CD4-positive, alpha-beta memory T cell (primary cell): ENCODE measurements at regions of chr1 and their contacts with region 1.

Region 1: DNA sequence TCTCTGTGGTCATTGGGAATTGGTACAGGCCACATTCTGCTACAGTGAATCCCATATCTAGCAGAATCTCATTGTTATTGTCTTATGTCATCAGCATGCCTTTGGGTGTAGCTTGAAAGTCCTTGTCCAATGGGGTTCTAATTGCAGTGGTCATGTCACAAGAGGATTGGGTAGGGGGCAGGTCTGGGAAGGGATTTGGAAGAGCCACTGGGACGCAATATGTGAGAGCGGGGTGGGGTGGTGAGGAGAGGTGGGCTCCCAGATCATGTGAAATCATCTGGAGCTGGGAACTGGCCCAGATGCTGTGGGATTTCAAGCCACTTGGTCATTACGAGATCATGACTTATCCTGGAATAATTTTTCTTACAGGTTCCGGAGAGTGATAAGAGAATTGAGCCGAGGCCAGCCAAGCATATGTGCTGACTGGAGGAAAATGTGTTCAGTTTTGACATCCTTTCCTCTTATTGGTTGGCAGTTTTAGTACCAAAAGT is 16.3 kb downstream of the CNIH3 start:
- DNase-seq: no peak
- H3K4me3 ChIP-seq: no peak overlapping the region
- H3K4me3 Mint-ChIP-seq: no peak overlapping the region
- H3K27ac ChIP-seq: no peak overlapping the region
- H3K27ac Mint-ChIP-seq: peak overlapping the region in 1 of 7 donors; percentile 73
- H3K4me1 ChIP-seq: peaks cover 2% of the 10 kb centered on the region
- H3K4me1 Mint-ChIP-seq: peaks cover 3 to 4% (median 3%) of the 10 kb centered on the region in 4 donors
- H3K27me3 ChIP-seq: no peaks in the 10 kb centered on the region
- H3K27me3 Mint-ChIP-seq: peaks cover 0 to 5% of the 10 kb centered on the region in 2 donors

Region 2: GRCh38 chr1:224644553-224645154 is 12.2 kb after region 1 on chr1:
- CTCF ChIA-PET with region 1: interaction called, 10 read pairs
- POLR2A ChIA-PET with region 1: no interaction called
- intact Hi-C with region 1: no loop called
- DNase-seq: peak in 4 of 5 donors; percentile 52 to 65 (median 60)
- H3K4me3 ChIP-seq: no peak overlapping the region
- H3K4me3 Mint-ChIP-seq: no peak overlapping the region
- H3K27ac ChIP-seq: no peak overlapping the region
- H3K27ac Mint-ChIP-seq: no peak overlapping the region
- H3K4me1 ChIP-seq: no peaks in the 10 kb centered on the region
- H3K4me1 Mint-ChIP-seq: peaks cover 0 to 2% (median 0%) of the 10 kb centered on the region in 4 donors
- H3K27me3 ChIP-seq: no peaks in the 10 kb centered on the region
- H3K27me3 Mint-ChIP-seq: peaks cover 2 to 9% of the 10 kb centered on the region in 2 donors

Region 3: GRCh38 chr1:224684979-224685425 is 52.6 kb after region 1 on chr1:
- CTCF ChIA-PET with region 1: no interaction called
- POLR2A ChIA-PET with region 1: no interaction called
- intact Hi-C with region 1: no loop called
- DNase-seq: no peak
- H3K4me3 ChIP-seq: no peak overlapping the region
- H3K4me3 Mint-ChIP-seq: no peak overlapping the region
- H3K27ac ChIP-seq: no peak overlapping the region
- H3K27ac Mint-ChIP-seq: no peak overlapping the region
- H3K4me1 ChIP-seq: no peaks in the 10 kb centered on the region
- H3K4me1 Mint-ChIP-seq: no peaks in the 10 kb centered on the region
- H3K27me3 ChIP-seq: no peaks in the 10 kb centered on the region
- H3K27me3 Mint-ChIP-seq: peaks cover 2 to 5% of the 10 kb centered on the region in 2 donors

Region 4: DNA sequence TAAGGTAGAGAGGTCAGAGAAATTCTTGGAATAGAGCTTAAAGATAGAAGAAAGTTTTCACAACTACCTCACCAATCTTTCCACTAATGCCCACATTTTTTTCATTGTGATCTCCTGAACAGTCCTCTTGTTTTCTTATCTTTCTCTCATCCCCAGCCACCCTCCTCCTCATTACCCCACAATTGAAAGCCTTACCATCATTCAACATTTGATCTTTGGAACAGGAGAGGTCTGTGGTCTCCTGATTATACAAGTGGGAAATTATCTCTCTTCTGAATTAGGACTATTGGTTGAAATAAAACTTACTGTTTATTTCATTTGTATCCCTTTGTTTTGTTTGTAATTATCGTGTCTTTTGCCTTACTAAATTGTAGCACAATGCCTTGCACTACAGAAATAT is 326.7 kb after region 1 on chr1:
- CTCF ChIA-PET with region 1: no interaction called
- POLR2A ChIA-PET with region 1: no interaction called
- intact Hi-C with region 1: no loop called
- DNase-seq: no peak
- H3K4me3 ChIP-seq: no peak overlapping the region
- H3K4me3 Mint-ChIP-seq: no peak overlapping the region
- H3K27ac ChIP-seq: no peak overlapping the region
- H3K27ac Mint-ChIP-seq: no peak overlapping the region
- H3K4me1 ChIP-seq: no peaks in the 10 kb centered on the region
- H3K4me1 Mint-ChIP-seq: no peaks in the 10 kb centered on the region
- H3K27me3 ChIP-seq: no peaks in the 10 kb centered on the region
- H3K27me3 Mint-ChIP-seq: peaks cover 2 to 6% of the 10 kb centered on the region in 2 donors